Activated T-helper 2 cell treated with anti-CD3 and anti-CD28 coated beads, Interferon-gamma antibody, Interleukin-2, Interleukin-4, amounts not matched to agents 10 μg/mL and 5 μg/mL and 100 μg/mL, durations not matched to agents 14 hours and 24 hours and 36 hours (primary cell): ENCODE measurements at regions of chr21 and their contacts with region 1.

Region 1: GRCh38 chr21:44873356-44874239 is at the start of gene PTTG1IP:
- DNase-seq: peak; percentile 100
- H3K4me3 Mint-ChIP-seq: peak within 1 kb of the TSS; percentile 87
- H3K27ac Mint-ChIP-seq: peak within 1 kb of the TSS; percentile 89
- H3K4me1 Mint-ChIP-seq: peaks cover 48% of the 10 kb centered on the region
- H3K27me3 Mint-ChIP-seq: no peaks in the 10 kb centered on the region
- total RNA-seq, gene PTTG1IP: 48.1 and 48.3 TPM in 2 replicates

Region 2: GRCh38 chr21:44792702-44793591 is 80.7 kb before region 1 on chr21:
- intact Hi-C with region 1: loop called (anchors 2 kb)
- DNase-seq: peak; percentile 40
- H3K4me3 Mint-ChIP-seq: no peak overlapping the region
- H3K27ac Mint-ChIP-seq: no peak overlapping the region
- H3K4me1 Mint-ChIP-seq: peaks cover 39% of the 10 kb centered on the region
- H3K27me3 Mint-ChIP-seq: no peaks in the 10 kb centered on the region

Region 3: DNA sequence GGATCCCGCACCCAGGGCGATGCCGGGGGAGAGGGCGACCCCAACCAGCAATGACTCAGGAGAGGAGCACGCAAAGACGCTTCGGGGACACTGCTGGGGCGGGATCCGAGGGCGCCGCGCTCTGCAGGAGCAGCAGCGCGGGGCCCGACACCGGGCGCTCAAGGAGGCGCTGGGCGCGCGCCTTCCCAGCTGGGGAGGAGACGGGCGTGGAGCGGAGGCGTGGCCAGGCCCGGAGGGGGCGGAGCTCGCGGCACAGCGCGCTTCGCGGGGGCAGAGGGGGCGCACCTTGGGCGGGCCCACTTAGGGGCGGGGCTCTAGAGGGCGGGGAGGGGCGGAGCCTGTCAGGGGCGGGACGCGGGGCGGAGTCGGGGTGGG is 56.1 kb before region 1 on chr21:
- intact Hi-C with region 1: loop called (anchors 1 kb)
- DNase-seq: peak; percentile 92
- H3K4me3 Mint-ChIP-seq: peak overlapping the region; percentile 66
- H3K27ac Mint-ChIP-seq: no peak overlapping the region
- H3K4me1 Mint-ChIP-seq: peaks cover 7% of the 10 kb centered on the region
- H3K27me3 Mint-ChIP-seq: peaks cover 2% of the 10 kb centered on the region

Region 4: GRCh38 chr21:44911389-44912157 is 38.0 kb after region 1 on chr21:
- intact Hi-C with region 1: loop called (anchors 2 kb)
- DNase-seq: peak; percentile 55
- H3K4me3 Mint-ChIP-seq: peak overlapping the region; percentile 70
- H3K27ac Mint-ChIP-seq: peak overlapping the region; percentile 70
- H3K4me1 Mint-ChIP-seq: peaks cover 51% of the 10 kb centered on the region
- H3K27me3 Mint-ChIP-seq: no peaks in the 10 kb centered on the region

Region 5: DNA sequence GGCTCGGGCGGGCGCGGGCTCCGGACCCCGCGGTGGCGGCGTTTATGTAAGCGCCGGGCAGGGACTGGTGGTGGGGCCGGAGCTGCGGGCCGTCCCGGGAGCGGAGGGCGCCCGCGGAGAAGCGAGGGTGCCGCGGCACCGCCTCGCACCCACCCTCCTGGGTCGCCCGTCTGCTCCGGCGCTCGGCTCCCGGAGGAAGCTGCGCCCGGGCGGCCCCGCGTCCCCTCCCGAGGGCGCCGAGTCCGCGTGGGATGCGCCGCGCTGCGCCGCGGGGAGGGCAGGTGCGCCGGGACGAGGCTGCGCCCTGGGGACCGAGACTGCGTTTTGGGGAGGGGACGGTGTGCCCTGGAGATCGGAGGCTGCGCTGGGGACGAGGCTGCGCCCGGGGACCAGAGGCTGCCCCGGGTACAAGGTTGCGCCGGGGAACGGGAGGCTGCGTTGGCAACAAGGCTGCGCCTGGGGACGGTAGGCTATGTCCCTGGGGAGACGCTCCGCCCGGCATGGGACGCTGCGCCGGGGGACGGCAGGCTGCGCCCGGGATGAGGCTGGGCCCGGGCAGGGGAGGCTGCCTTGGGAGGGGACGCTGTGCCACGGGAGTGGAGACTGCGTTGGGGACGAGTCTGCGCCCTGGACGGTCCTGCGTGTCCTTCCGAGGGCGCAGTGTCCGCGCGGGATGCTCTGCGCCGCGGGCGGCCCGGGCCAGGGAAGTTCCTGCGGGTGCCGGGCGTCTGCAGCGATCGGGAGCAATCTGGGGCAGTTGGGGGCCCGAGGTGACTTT is 201.4 kb after region 1 on chr21:
- intact Hi-C with region 1: loop called (anchors 5 kb)
- DNase-seq: peak; percentile 22
- H3K4me3 Mint-ChIP-seq: peak overlapping the region; percentile 81
- H3K27ac Mint-ChIP-seq: no peak overlapping the region
- H3K4me1 Mint-ChIP-seq: peaks cover 48% of the 10 kb centered on the region
- H3K27me3 Mint-ChIP-seq: no peaks in the 10 kb centered on the region